ENCODE measurements at regions of chr22 and their contacts with region 1.

Region 1: DNA sequence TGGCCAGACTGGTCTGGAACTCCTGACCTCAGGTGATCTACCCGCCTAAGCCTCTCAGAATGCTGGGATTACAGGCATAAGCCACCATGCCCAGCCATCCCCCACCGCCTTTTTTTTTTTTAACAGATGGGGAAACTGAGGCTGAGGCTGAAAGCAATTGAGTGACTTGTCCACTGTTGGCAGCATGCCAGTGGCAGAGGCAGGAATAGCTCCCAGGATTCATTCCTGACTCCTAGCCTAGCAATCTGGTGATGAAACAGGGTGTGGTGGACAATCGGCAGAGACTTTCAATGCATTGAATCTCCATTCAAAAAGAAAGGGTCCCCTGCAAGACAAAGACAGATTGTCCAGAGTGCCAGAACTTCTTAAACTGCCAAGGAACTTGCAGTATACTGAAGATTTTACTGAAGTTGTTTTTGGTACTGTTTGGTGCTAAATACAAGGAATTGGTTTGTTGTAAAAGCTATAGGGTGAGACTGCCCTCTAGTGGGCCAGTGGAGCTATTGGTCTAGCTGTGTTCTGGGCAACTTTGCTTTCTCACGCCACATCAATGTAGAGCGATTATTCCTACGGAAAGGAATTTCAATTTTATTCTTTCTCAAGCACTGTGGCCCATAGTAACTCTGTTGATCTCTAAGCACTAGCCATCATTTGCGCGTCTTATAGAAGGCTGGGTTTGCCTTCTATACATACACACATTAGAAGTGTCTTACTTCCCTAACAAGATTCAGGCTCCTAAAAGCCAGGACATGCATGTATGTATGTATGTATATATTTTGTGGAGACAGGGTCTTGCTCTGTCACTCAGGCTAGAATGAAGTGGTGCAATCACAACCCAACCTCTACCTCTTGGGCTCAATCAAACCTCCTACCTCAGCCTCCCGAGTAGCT is 21.0 kb downstream of the C22orf31 start:
- DNase-seq: peak; percentile 88
- H3K4me3 ChIP-seq: no peak overlapping the region
- H3K27ac ChIP-seq: peak overlapping the region; percentile 2
- H3K27me3 ChIP-seq: no peaks in the 10 kb centered on the region
- CTCF ChIP-seq: peak; percentile 98

Region 2: GRCh38 chr22:28600546-28601143 is 440.0 kb before region 1 on chr22:
- CTCF ChIA-PET with region 1: interaction called, 12 read pairs
- POLR2A ChIA-PET with region 1: no interaction called
- DNase-seq: peak; percentile 30
- H3K4me3 ChIP-seq: no peak overlapping the region
- H3K27ac ChIP-seq: no peak overlapping the region
- H3K27me3 ChIP-seq: no peaks in the 10 kb centered on the region
- CTCF ChIP-seq: peak; percentile 44

Region 3: GRCh38 chr22:28829358-28830181 is 211.1 kb before region 1 on chr22:
- CTCF ChIA-PET with region 1: interaction called, 26 read pairs
- POLR2A ChIA-PET with region 1: no interaction called
- DNase-seq: peak; percentile 53
- H3K4me3 ChIP-seq: no peak overlapping the region
- H3K27ac ChIP-seq: no peak overlapping the region
- H3K27me3 ChIP-seq: no peaks in the 10 kb centered on the region
- CTCF ChIP-seq: peak; percentile 97

Region 4: DNA sequence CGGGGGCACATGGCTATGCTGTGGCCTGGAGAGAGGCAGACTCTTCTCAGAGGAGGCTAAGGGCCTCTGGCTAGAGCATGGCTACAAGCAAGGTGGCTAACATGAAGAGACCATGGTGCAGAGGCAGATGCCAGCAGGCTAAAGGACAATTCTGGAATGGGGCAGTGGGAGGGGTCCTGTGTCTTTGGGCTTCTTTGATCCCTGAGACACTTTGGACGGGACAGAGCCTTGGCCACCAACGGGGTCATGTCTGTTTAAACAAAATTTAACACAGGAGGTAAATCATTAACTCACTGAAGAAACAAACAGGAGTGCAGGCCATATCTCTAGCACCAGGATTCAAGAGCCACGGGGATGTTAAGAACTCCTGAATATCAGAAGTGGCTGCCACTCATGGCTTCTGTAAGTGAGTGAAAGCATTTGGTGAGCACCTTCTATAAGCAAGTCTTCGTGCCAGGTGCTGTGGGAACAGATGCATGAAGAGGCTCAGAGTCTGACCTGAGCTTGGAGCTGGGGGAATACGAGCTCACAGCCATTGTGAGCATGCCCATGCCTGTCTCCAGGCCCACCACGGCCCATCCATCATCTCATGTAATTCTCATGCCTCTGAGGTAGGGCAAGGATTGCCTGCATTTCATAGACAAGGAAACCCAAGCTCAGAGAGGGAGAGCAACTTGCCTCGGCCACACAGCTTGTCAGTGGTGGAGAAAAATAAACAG is 175.6 kb before region 1 on chr22:
- CTCF ChIA-PET with region 1: interaction called, 13 read pairs
- POLR2A ChIA-PET with region 1: no interaction called
- DNase-seq: no peak
- H3K4me3 ChIP-seq: no peak overlapping the region
- H3K27ac ChIP-seq: no peak overlapping the region
- H3K27me3 ChIP-seq: no peaks in the 10 kb centered on the region
- CTCF ChIP-seq: no peak

Region 5: DNA sequence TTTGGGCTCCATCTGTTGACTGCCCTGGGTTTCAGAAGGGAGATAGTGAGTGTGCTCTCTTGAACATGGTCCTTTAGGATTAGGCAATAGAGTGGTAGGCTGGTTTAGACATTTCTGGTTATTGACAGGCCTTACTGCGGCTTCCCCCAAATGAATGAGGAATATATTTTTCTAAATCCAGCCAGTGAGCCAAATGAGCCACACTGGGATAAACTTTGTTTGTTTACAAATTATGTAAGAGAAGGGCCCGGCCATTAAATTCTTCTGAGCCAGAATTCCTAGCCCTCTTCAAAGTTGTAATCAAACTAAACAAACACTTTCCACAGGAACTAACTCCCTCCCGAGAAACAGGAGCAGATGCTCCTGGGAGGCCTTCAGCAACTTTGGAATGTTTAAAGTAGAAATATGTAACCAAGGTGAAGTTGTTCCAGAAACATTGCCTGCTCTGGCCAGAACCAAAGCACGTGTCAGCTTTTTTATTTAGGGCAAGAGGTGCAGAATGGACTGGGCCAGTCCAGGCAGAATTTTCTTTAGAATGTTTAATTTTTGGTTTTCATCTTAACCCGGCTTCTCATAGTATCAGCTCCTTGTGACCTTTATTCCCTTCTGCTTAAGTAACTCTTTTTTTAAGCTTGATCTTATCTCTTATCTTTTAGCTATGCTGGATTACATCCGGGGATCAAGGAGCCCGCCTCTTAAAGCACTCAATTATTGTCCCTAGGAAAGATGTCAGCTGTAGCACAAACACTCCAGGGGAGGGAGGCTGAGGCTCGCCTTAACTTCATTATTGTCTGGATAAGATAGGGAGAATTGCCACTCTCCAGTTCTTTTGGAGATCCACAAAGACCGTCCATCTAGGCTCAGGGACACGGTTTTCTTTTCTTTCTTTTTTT is 128.6 kb before region 1 on chr22:
- CTCF ChIA-PET with region 1: no interaction called
- POLR2A ChIA-PET with region 1: no interaction called
- DNase-seq: peak; percentile 39
- H3K4me3 ChIP-seq: no peak overlapping the region
- H3K27ac ChIP-seq: no peak overlapping the region
- H3K27me3 ChIP-seq: no peaks in the 10 kb centered on the region
- CTCF ChIP-seq: no peak

Region 6: DNA sequence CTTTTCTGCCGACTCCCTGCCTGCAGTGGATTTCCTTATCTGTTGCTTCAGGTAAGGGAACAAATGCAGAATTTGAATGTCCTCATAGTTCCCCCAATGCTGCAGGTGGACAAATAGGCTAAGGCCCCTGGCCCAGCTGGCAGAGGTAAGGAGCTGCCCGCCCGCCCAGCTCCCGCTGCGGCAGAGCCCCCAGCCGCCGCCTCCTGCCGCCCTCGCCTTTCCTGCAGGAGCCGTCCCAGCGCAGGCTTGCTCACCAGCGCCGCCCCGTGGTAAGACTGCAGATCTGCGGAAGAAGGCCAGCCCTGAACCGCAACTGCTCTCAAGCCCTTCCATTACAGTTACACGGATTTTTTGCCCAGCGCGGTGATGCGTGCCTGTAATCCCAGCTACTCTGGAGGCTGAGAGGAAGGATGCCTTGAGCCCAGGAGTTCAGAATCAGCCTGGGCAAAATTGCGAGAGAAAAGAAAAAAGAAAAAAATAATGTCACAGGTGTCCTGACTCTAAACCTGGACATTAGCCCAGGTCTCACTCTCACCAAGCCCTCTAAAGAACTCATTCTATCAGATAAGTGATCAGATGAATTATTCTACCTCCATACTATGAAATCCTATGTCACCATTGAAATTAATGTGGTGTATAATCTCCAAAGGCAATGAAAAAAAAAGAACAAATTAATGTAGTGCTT is 113.9 kb after region 1 on chr22:
- CTCF ChIA-PET with region 1: interaction called, 42 read pairs
- POLR2A ChIA-PET with region 1: interaction called, 11 read pairs
- DNase-seq: peak; percentile 15
- H3K4me3 ChIP-seq: peak overlapping the region; percentile 25; the same call in 1 of the 2 replicates
- H3K27ac ChIP-seq: no peak overlapping the region
- H3K27me3 ChIP-seq: no peaks in the 10 kb centered on the region
- CTCF ChIP-seq: peak; percentile 93

Measured in AG04450 (cell line).